Activated CD8-positive, alpha-beta T cell treated with anti-CD3 and anti-CD28 coated beads, Interleukin-2, amount 10 ng/mL, durations not matched to agents 7 days and 5 days (primary cell): ENCODE measurements at regions of chr7 and their contacts with region 1.

Region 1: GRCh38 chr7:90424720-90425119 is 21.5 kb downstream of the CLDN12 start:
- DNase-seq: no peak
- ATAC-seq: no peak
- H3K4me3 Mint-ChIP-seq: no peak overlapping the region
- H3K27ac Mint-ChIP-seq: no peak overlapping the region
- H3K4me1 Mint-ChIP-seq: peaks cover 8% of the 10 kb centered on the region
- H3K27me3 Mint-ChIP-seq: no peaks in the 10 kb centered on the region

Region 2: DNA sequence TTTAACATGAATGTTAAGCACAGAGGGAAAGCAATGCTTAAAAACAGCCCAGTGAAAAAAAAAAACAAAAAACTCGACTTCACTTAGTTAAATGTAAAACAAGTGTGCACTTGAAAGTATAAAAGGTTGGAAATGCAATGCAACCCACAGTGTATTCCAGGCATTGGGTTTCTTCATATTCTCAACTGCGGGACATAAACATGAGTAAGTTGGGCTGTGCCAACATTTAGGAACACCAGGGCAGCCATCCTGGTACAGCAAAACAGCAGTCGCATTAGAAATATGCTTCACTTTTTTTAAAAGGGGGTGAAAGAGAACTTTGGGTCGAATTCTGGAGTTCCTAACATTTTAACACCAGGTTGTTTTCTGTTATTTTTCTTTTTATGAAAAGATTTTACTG is 269.5 kb before region 1 on chr7:
- CTCF ChIA-PET with region 1: interaction called, 26 read pairs
- POLR2A ChIA-PET with region 1: no interaction called
- DNase-seq: no peak
- ATAC-seq: no peak
- H3K4me3 Mint-ChIP-seq: no peak overlapping the region
- H3K27ac Mint-ChIP-seq: no peak overlapping the region
- H3K4me1 Mint-ChIP-seq: peaks cover 5% of the 10 kb centered on the region
- H3K27me3 Mint-ChIP-seq: peaks cover 22% of the 10 kb centered on the region

Region 3: DNA sequence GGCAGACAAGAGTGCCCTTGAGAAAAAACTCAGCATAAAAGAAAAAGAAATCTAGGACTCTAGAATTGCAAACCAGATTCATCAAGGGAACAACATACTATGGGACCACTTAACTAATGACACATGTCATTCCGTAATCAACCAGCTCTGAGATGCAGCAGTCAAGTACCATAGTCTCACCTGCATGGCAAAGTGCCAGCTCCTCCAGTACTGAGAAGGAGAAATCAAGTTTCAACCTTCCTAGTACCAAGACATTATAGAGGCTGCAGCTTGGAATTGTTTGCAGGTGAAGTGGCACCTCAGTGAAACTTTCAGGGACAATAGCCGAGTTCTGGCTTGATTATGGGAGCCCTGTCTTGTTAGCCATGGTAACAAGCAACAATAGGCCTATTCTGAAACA is 259.0 kb before region 1 on chr7:
- CTCF ChIA-PET with region 1: interaction called, 10 read pairs
- POLR2A ChIA-PET with region 1: no interaction called
- DNase-seq: no peak
- ATAC-seq: no peak
- H3K4me3 Mint-ChIP-seq: no peak overlapping the region
- H3K27ac Mint-ChIP-seq: no peak overlapping the region
- H3K4me1 Mint-ChIP-seq: no peaks in the 10 kb centered on the region
- H3K27me3 Mint-ChIP-seq: peaks cover 24% of the 10 kb centered on the region

Region 4: DNA sequence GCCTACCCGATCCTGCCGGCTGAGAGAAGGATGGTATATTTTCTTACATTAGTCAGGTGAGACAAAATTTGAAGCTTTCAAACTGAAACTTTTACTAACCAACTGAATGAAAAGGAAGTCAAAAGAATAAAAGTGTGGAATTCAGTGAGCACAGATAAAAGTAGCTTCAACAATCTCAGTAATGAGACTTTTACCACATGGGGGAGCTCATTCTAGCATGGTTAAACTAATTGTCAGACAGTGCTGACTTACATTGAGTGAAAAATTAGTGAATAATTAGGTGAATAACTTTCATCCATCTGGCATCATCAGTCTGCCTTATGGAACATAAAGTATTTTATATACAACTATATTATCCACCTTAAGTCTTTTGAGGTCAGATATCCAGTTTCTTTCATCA is 112.0 kb before region 1 on chr7:
- CTCF ChIA-PET with region 1: interaction called, 20 read pairs
- POLR2A ChIA-PET with region 1: no interaction called
- DNase-seq: no peak
- ATAC-seq: no peak
- H3K4me3 Mint-ChIP-seq: no peak overlapping the region
- H3K27ac Mint-ChIP-seq: no peak overlapping the region
- H3K4me1 Mint-ChIP-seq: no peaks in the 10 kb centered on the region
- H3K27me3 Mint-ChIP-seq: peaks cover 16% of the 10 kb centered on the region

Region 5: DNA sequence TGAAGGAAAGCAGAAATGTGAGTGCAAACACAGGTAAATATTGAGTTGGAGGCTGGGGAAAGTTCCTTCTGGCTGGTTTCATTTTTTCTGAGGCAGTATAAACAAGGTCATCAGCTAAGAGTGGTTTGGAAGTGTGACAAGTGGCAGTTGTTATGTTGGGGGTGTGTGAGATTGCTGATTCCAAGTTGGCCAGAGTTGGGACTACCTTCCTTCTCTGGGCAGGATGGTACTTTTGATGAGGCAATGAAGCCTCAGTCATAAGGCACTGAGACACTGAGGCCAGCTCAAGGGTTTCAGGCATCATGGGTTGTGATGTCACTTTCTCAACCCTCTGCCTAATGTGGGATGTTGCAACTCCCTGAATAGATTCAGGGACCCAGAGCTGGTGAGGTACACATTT is 36.5 kb after region 1 on chr7:
- CTCF ChIA-PET with region 1: no interaction called
- POLR2A ChIA-PET with region 1: no interaction called
- DNase-seq: no peak
- ATAC-seq: no peak
- H3K4me3 Mint-ChIP-seq: no peak overlapping the region
- H3K27ac Mint-ChIP-seq: no peak overlapping the region
- H3K4me1 Mint-ChIP-seq: peaks cover 10% of the 10 kb centered on the region
- H3K27me3 Mint-ChIP-seq: no peaks in the 10 kb centered on the region

Region 6: GRCh38 chr7:90492250-90492649 is 67.5 kb after region 1 on chr7:
- CTCF ChIA-PET with region 1: no interaction called
- POLR2A ChIA-PET with region 1: no interaction called
- DNase-seq: no peak
- ATAC-seq: no peak
- H3K4me3 Mint-ChIP-seq: no peak overlapping the region
- H3K27ac Mint-ChIP-seq: no peak overlapping the region
- H3K4me1 Mint-ChIP-seq: no peaks in the 10 kb centered on the region
- H3K27me3 Mint-ChIP-seq: no peaks in the 10 kb centered on the region